Caco-2 (cell line): ENCODE measurements at regions of chr14 and their contacts with region 1.

Region 1: DNA sequence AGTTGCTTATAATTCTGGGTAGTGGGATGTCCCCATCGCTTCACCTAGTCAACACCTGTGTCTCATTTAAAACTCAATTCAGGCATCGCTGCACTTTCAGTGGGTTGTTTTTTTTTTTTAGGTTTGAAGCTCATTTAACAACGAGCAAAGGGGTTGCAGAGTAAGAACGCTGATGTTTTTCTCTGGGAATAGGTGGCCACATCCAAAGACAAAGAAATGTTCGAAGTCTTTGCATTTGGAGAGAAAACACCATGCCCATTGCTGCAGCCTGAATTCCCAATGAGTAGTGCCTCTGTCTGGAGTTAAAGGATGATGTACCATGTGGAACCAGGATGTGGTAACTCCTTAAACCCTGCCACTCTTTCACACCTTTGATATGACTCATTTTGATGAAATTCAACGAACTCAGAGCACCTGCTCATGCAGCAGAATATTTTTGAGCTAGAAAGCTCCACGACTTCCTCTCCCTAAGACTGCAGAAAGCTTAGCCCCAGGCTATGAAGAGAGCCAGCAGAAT is 35.1 kb upstream of the BATF start:
- DNase-seq: no peak
- H3K4me3 ChIP-seq: no peak overlapping the region
- H3K4me3 Mint-ChIP-seq: no peak overlapping the region
- H3K27ac Mint-ChIP-seq: no peak overlapping the region
- H3K4me1 ChIP-seq: no peaks in the 10 kb centered on the region
- H3K4me1 Mint-ChIP-seq: no peaks in the 10 kb centered on the region
- H3K27me3 ChIP-seq: no peaks in the 10 kb centered on the region
- H3K27me3 Mint-ChIP-seq: no peaks in the 10 kb centered on the region
- CTCF ChIP-seq: no peak

Region 2: GRCh38 chr14:75132382-75133086 is 354.7 kb before region 1 on chr14:
- CTCF ChIA-PET with region 1: no interaction called
- POLR2A ChIA-PET with region 1: no interaction called
- intact Hi-C with region 1: loop called (anchors 2 kb)
- DNase-seq: peak; percentile 62 to 80
- H3K4me3 ChIP-seq: no peak overlapping the region
- H3K4me3 Mint-ChIP-seq: no peak overlapping the region
- H3K27ac Mint-ChIP-seq: peak overlapping the region; percentile 51
- H3K4me1 ChIP-seq: 0 out of 2 replicates have a peak, but pooled peaks cover 7% of the 10 kb centered on the region
- H3K4me1 Mint-ChIP-seq: no peaks in the 10 kb centered on the region
- H3K27me3 ChIP-seq: no peaks in the 10 kb centered on the region
- H3K27me3 Mint-ChIP-seq: no peaks in the 10 kb centered on the region
- CTCF ChIP-seq: peak; percentile 62 to 75

Region 3: GRCh38 chr14:75409316-75410205 is 77.7 kb before region 1 on chr14:
- CTCF ChIA-PET with region 1: no interaction called
- POLR2A ChIA-PET with region 1: no interaction called
- intact Hi-C with region 1: no loop called
- DNase-seq: no peak
- H3K4me3 ChIP-seq: no peak overlapping the region
- H3K4me3 Mint-ChIP-seq: no peak overlapping the region
- H3K27ac Mint-ChIP-seq: no peak overlapping the region
- H3K4me1 ChIP-seq: no peaks in the 10 kb centered on the region
- H3K4me1 Mint-ChIP-seq: no peaks in the 10 kb centered on the region
- H3K27me3 ChIP-seq: no peaks in the 10 kb centered on the region
- H3K27me3 Mint-ChIP-seq: no peaks in the 10 kb centered on the region
- CTCF ChIP-seq: no peak

Region 4: DNA sequence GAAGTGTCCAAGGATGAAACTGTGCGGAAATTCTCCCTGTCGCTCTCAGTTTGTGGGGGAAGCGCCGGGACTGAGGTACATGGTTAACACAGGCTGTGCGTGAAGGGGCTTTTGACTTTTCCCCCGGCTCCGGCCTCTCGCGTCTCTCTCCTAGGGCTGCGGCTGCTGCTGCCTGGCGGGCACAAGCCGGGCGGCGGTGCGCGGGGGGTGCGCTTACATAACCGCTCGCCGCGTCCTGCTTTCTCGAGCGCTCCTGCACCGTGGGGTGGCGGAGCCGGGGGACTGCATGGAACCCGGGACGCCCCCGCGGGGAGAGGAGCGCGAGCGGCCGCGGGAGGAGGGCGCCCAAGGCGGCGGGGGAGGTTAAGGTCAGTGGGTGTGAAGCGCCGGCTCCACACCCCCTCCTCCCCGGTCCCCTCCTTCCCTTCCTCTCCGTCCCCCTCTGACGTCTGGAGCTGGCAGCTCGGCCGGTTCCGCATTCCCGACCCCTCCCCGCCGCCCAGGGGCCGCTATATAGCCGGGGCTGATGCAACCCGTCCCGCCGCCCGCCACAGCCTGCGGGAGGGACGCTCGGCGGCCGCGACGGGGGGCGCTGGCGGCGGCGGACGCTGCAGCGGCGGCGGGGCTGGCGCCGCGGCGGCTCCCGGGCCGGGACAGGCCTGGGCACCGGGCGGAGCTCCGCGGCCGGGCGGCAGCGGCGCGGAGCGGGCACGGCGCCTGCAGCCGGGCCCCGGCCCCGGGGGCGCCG is 59.6 kb before region 1 on chr14 and contains the start of gene JDP2:
- CTCF ChIA-PET with region 1: interaction called, 7 read pairs
- POLR2A ChIA-PET with region 1: no interaction called
- intact Hi-C with region 1: loop called (anchors 2 kb)
- DNase-seq: peak; percentile 93 to 96
- H3K4me3 ChIP-seq: peak within 1 kb of the TSS; percentile 84
- H3K4me3 Mint-ChIP-seq: peak within 1 kb of the TSS; percentile 83
- H3K27ac Mint-ChIP-seq: peak within 1 kb of the TSS; percentile 67
- H3K4me1 ChIP-seq: peaks cover 19% of the 10 kb centered on the region
- H3K4me1 Mint-ChIP-seq: peaks cover 18% of the 10 kb centered on the region
- H3K27me3 ChIP-seq: no peaks in the 10 kb centered on the region
- H3K27me3 Mint-ChIP-seq: no peaks in the 10 kb centered on the region
- CTCF ChIP-seq: peak in 1 of 2 experiments; percentile 34
- total RNA-seq, gene JDP2: 95.7 TPM in 2 replicates

Region 5: DNA sequence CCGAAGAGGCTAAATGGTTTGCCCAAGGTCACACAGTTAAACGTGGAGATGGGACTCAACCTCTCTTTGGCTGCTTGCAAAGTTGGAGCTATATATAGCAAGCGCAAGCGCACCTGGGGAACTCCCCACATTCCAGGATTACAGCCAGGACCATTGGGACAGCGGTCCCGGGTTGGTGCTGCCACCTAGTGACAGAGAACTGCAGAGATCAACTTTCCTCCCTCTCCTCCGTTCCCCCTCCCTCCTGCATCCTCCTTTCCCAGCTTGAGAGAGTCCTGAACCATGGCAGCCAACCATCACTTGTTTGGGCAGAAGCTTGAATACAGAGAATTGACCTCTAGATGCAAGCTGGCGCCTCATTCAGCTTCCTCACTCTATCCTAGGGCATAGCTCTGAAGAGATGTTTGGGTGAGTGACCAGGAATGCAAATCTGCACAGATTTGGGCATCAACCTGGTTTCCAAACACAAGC is 73.8 kb after region 1 on chr14:
- CTCF ChIA-PET with region 1: interaction called, 27 read pairs
- POLR2A ChIA-PET with region 1: no interaction called
- intact Hi-C with region 1: loop called (anchors 1 kb)
- DNase-seq: peak; percentile 87 to 90
- H3K4me3 ChIP-seq: no peak overlapping the region
- H3K4me3 Mint-ChIP-seq: no peak overlapping the region
- H3K27ac Mint-ChIP-seq: no peak overlapping the region
- H3K4me1 ChIP-seq: peaks cover 16% of the 10 kb centered on the region
- H3K4me1 Mint-ChIP-seq: peaks cover 29% of the 10 kb centered on the region
- H3K27me3 ChIP-seq: no peaks in the 10 kb centered on the region
- H3K27me3 Mint-ChIP-seq: peaks cover 3% of the 10 kb centered on the region
- CTCF ChIP-seq: peak; percentile 82 to 87